Heart right ventricle (tissue), 16 donors: ENCODE measurements at regions of chr9 and their contacts with region 1.

Region 1: DNA sequence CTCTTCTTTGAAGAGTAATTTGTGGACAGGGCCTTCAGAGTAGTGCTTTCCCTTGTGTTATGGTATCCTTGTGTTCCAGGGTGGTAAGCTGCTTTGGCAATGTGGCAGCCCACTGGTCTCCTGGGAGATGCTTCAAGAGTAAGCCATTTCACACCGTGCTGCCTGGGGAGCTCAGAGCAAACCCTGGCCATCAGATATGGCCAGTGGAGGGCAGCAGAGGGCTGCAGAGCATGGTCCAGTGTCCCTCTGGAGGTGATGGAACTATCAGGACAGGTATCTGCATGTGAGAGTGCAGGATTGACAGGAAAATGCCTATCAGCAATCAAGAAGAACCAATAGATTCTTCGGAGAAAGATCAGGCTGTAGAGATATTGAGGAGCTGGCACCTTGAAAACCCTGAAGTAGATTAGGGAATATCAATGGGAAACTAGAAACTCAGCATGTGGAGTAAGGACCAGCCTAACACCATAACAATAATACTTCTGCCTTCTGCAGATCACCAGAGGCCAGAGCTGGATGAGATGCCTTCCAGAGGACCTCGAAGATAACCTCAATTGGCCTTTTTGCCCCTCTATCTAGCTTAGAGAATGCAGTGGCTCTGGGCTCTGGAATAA is 90.8 kb downstream of the PLPPR1 start:
- DNase-seq: peak; percentile 30 to 31
- ATAC-seq: peak in 6 of 8 donors; percentile 34 to 78 (median 62)
- H3K4me3 ChIP-seq: no peak overlapping the region
- H3K27ac ChIP-seq: no peak overlapping the region
- H3K4me1 ChIP-seq: peaks cover 0 to 11% (median 0%) of the 10 kb centered on the region in 9 donors
- H3K27me3 ChIP-seq: peaks cover 0 to 6% (median 0%) of the 10 kb centered on the region in 7 donors
- CTCF ChIP-seq: peak; percentile 54 to 77 (median 72)

Region 2: DNA sequence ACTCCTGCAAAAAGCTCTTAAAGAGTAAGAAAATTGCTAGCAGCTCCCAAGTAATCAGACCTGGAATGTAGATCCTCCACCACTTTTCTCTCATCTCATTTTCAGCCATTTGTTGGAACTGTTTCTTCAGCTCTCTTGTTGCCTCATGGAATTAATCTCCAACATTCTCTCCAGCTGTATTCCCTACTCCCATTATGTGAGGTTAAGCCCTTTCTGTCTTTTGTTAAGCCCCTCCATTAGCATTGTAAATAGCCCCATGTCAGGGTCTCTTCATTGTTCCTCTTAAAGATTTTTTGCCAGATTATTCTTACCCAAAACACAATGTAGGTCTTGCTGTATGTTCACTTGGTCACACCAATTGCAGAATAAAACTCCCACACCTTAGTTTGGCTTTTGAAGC is 29.0 kb after region 1 on chr9:
- intact Hi-C with region 1: loop called in 1 of 10 experiments (anchors 1 kb)
- DNase-seq: no peak
- ATAC-seq: no peak
- H3K4me3 ChIP-seq: no peak overlapping the region
- H3K27ac ChIP-seq: no peak overlapping the region
- H3K4me1 ChIP-seq: no peaks in the 10 kb centered on the region
- H3K27me3 ChIP-seq: no peaks in the 10 kb centered on the region
- CTCF ChIP-seq: no peak

Region 3: GRCh38 chr9:101162231-101162630 is 42.9 kb after region 1 on chr9:
- intact Hi-C with region 1: no loop called
- DNase-seq: no peak
- ATAC-seq: no peak
- H3K4me3 ChIP-seq: no peak overlapping the region
- H3K27ac ChIP-seq: no peak overlapping the region
- H3K4me1 ChIP-seq: no peaks in the 10 kb centered on the region
- H3K27me3 ChIP-seq: no peaks in the 10 kb centered on the region
- CTCF ChIP-seq: no peak

Region 4: GRCh38 chr9:101229606-101230005 is 110.3 kb after region 1 on chr9:
- intact Hi-C with region 1: loop called in 6 of 10 experiments (anchors 2 to 10 kb)
- DNase-seq: no peak
- ATAC-seq: no peak
- H3K4me3 ChIP-seq: no peak overlapping the region
- H3K27ac ChIP-seq: no peak overlapping the region
- H3K4me1 ChIP-seq: no peaks in the 10 kb centered on the region
- H3K27me3 ChIP-seq: peaks cover 0 to 4% (median 0%) of the 10 kb centered on the region in 7 donors
- CTCF ChIP-seq: no peak

Region 5: DNA sequence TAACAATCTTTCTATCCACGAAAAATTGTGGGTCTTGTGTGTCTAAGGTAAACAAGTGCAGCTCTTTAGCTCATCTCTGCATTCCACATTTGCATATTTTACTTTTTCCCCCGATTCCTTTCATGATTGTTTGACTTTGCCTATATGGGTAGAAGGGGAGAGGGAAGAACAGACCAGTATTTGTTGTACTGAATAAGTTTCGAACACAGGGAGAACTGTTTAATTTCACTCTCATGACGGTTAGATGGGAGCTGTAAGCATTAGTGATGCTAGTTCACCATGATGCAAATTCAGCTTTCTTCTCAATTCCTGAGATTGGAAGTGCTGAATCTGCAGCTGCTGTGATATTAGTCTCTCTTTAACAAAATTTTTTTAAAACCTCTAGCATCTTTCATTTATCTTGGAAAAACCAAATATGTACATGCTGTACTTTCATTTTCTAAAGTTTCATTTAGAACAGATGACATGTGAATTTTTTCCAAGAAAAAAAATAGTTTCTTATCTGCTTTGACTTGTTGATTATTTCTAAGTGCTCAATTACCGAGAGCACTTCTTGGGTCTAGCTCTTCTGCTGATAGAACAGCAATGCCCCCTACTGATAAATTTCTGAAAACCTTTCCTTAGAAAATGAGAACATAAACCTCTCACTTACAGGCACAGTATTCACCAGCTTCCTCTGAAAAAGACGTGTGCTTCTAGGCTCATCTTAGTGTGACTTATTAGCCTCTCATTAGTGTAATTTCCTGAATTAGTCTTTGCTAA is 116.0 kb after region 1 on chr9:
- intact Hi-C with region 1: loop called in 9 of 10 experiments (anchors 2 to 10 kb)
- DNase-seq: no peak
- ATAC-seq: no peak
- H3K4me3 ChIP-seq: no peak overlapping the region
- H3K27ac ChIP-seq: no peak overlapping the region
- H3K4me1 ChIP-seq: no peaks in the 10 kb centered on the region
- H3K27me3 ChIP-seq: peaks cover 0 to 6% (median 0%) of the 10 kb centered on the region in 7 donors
- CTCF ChIP-seq: peak; percentile 29 to 75 (median 54)

Region 6: DNA sequence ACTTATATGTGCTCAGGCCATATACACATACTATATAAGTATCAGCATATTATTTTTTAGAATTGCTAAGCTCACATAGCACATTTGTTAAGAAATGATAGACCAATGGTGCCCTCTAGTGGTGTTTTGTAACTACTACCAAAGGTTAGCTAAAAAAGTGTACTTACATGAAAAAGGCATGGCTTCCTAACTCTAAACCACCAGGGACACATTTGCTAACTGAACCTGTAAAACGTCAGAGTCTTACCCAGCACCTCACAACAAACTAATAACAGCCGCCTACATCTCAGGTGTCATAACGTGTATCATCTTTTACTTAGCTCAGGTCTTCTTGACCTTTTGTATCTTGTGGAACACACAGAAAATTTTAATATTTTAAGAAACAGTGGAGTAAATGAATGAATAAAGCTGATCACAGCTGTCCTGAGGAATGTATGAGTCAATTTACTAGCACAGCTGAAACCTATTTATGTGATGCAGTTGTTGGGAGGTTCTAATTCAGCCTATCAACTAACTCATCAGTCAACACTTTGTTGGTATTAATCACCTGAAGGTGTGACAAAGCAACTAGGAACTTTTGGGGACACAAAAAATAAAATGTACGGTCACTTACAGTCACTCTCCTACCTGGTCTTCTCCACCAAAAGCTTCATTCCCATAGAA is 192.6 kb after region 1 on chr9:
- intact Hi-C with region 1: loop called in 9 of 10 experiments (anchors 5 to 10 kb)
- DNase-seq: peak in 1 of 2 donors; percentile 47
- ATAC-seq: no peak
- H3K4me3 ChIP-seq: no peak overlapping the region
- H3K27ac ChIP-seq: no peak overlapping the region
- H3K4me1 ChIP-seq: peaks cover 0 to 5% (median 0%) of the 10 kb centered on the region in 9 donors
- H3K27me3 ChIP-seq: peaks cover 0 to 19% (median 6%) of the 10 kb centered on the region in 7 donors
- CTCF ChIP-seq: peak; percentile 53 to 83 (median 74)

Region 7: GRCh38 chr9:101324245-101324804 is 205.0 kb after region 1 on chr9:
- intact Hi-C with region 1: loop called in 3 of 10 experiments (anchors 5 to 10 kb)
- DNase-seq: no peak
- ATAC-seq: no peak
- H3K4me3 ChIP-seq: no peak overlapping the region
- H3K27ac ChIP-seq: no peak overlapping the region
- H3K4me1 ChIP-seq: no peaks in the 10 kb centered on the region
- H3K27me3 ChIP-seq: peaks cover 0 to 24% (median 3%) of the 10 kb centered on the region in 7 donors
- CTCF ChIP-seq: no peak